WTC11 (cell line): ENCODE measurements at regions of chr10 and their contacts with region 1.

Region 1: GRCh38 chr10:92517034-92517655 is 56.7 kb downstream of the IDE start:
- DNase-seq: peak; percentile 54
- ATAC-seq: peak; percentile 91
- H3K4me3 Mint-ChIP-seq: no peak overlapping the region
- H3K27ac Mint-ChIP-seq: no peak overlapping the region
- H3K4me1 Mint-ChIP-seq: no peaks in the 10 kb centered on the region
- H3K27me3 Mint-ChIP-seq: no peaks in the 10 kb centered on the region
- CTCF ChIP-seq: peak; percentile 58

Region 2: DNA sequence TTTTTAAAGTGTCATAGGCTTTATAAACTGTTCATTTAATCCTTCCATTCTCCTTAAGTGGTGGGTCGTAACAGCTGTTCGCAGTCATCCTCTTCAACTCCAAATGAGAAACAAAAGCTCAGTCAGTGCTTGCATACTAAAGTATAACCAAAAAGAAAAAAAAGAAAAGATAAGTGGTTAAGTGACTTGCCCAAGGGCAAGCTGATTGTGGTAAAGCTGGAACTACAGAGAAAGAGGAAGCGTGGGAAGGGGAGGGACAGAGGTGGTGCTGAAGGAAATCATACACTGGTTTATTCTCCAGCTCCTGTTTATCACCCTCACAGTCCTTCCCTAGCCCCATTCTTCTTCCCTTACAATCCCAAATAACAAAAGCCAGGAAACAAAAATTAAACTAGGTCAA is 27.2 kb after region 1 on chr10:
- CTCF ChIA-PET with region 1: interaction called, 10 read pairs
- POLR2A ChIA-PET with region 1: no interaction called
- DNase-seq: no peak
- ATAC-seq: peak; percentile 51; the same call in 1 of the 2 replicates
- H3K4me3 Mint-ChIP-seq: no peak overlapping the region
- H3K27ac Mint-ChIP-seq: peak overlapping the region; percentile 67; the same call in 1 of the 2 replicates
- H3K4me1 Mint-ChIP-seq: peaks cover 36% of the 10 kb centered on the region
- H3K27me3 Mint-ChIP-seq: no peaks in the 10 kb centered on the region
- CTCF ChIP-seq: no peak

Region 3: GRCh38 chr10:92573798-92574547 is 56.8 kb after region 1 on chr10 and contains the start of gene IDE:
- CTCF ChIA-PET with region 1: interaction called, 32 read pairs
- POLR2A ChIA-PET with region 1: interaction called, 4 read pairs
- DNase-seq: peak; percentile 94
- ATAC-seq: peak; percentile 86
- H3K4me3 Mint-ChIP-seq: peak within 1 kb of the TSS; percentile 67
- H3K27ac Mint-ChIP-seq: no peak within 1 kb of the TSS; the same call in 1 of the 2 replicates
- H3K4me1 Mint-ChIP-seq: peaks cover 29% of the 10 kb centered on the region
- H3K27me3 Mint-ChIP-seq: no peaks in the 10 kb centered on the region
- CTCF ChIP-seq: no peak
- total RNA-seq, gene IDE: 44.0 to 50.5 TPM (median 45.2 TPM) in 3 replicates

Region 4: DNA sequence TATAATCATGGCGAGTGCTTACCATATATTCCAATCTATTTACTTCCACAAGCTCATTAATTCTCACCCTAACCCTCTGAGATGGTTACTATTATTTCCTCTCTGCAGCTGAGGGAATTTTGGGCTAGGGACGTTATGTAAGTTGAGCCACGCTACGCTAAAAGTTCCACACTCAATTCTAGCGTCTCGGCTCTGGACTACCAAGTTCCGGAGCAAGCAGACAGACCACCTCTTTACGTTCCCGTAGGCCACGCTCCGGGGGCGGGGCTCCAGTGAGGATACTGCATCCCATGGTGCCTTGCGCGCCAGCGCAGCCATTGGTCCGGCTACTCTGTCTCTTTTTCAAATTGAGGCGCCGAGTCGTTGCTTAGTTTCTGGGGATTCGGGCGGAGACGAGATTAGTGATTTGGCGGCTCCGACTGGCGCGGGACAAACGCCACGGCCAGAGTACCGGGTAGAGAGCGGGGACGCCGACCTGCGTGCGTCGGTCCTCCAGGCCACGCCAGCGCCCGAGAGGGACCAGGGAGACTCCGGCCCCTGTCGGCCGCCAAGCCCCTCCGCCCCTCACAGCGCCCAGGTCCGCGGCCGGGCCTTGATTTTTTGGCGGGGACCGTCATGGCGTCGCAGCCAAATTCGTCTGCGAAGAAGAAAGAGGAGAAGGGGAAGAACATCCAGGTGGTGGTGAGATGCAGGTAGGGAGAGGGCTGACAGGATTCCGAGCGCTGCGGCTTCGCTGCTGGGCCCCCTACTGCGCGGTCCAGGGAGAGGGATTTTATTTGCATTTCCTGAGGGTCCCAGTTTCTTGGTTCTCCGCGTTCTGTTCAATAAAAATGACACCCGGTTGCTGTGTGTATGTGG is 75.8 kb after region 1 on chr10 and contains the start of gene KIF11:
- CTCF ChIA-PET with region 1: interaction called, 10 read pairs
- POLR2A ChIA-PET with region 1: no interaction called
- DNase-seq: peak; percentile 97
- ATAC-seq: peak; percentile 88
- H3K4me3 Mint-ChIP-seq: peak within 1 kb of the TSS; percentile 95
- H3K27ac Mint-ChIP-seq: peak within 1 kb of the TSS; percentile 100
- H3K4me1 Mint-ChIP-seq: peaks cover 52% of the 10 kb centered on the region
- H3K27me3 Mint-ChIP-seq: no peaks in the 10 kb centered on the region
- CTCF ChIP-seq: no peak
- total RNA-seq, gene KIF11: 46.0 to 55.7 TPM (median 47.5 TPM) in 3 replicates